ENCODE measurements at regions of chr17 and their contacts with region 1.

Region 1: DNA sequence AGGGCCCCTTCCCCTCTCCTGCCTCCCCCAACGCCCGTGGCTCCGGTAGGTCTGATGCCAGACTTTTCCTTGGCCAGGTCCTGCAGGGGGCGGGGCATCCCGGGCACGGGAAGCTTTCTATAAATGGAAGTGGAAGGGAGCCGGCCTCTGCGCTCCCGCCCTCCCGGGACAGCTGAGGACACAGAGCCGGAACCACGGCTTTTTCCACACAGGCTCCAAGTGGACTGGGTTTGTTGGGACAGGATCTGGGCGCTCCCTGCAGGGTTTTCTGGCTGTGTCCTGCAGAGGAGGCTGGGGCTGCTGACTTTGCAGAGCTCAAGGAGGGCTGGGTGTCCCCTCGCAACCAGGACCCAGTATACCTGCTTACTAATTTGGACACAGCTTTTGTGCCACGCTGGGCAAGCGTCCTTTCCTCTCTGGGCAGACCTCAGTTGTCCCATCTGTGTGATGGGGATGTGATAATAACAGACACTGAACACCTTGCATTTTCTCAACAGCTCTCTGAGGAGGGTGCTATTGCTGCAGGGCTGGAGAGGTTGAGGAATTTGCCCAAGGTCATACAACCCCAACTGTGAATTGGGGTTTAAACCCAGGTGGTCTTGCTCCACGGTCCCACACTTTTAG is 1.8 kb downstream of the TNS4 start:
- DNase-seq: peak; percentile 71
- H3K4me3 ChIP-seq: peak overlapping the region; percentile 69 to 98 (median 77)
- H3K27ac ChIP-seq: peak overlapping the region; percentile 96
- H3K4me1 ChIP-seq: peaks cover 37% of the 10 kb centered on the region
- H3K27me3 ChIP-seq: no peaks in the 10 kb centered on the region
- CTCF ChIP-seq: peak in 1 of 2 donors; percentile 16

Region 2: GRCh38 chr17:40422990-40423616 is 76.6 kb before region 1 on chr17:
- CTCF ChIA-PET with region 1: no interaction called
- dilution Hi-C with region 1: loop called (anchors 5 kb)
- in situ Hi-C with region 1: no loop called
- intact Hi-C with region 1: no loop called
- DNase-seq: no peak
- H3K4me3 ChIP-seq: no peak overlapping the region
- H3K27ac ChIP-seq: no peak overlapping the region
- H3K4me1 ChIP-seq: no peaks in the 10 kb centered on the region
- H3K27me3 ChIP-seq: no peaks in the 10 kb centered on the region
- CTCF ChIP-seq: no peak

Region 3: DNA sequence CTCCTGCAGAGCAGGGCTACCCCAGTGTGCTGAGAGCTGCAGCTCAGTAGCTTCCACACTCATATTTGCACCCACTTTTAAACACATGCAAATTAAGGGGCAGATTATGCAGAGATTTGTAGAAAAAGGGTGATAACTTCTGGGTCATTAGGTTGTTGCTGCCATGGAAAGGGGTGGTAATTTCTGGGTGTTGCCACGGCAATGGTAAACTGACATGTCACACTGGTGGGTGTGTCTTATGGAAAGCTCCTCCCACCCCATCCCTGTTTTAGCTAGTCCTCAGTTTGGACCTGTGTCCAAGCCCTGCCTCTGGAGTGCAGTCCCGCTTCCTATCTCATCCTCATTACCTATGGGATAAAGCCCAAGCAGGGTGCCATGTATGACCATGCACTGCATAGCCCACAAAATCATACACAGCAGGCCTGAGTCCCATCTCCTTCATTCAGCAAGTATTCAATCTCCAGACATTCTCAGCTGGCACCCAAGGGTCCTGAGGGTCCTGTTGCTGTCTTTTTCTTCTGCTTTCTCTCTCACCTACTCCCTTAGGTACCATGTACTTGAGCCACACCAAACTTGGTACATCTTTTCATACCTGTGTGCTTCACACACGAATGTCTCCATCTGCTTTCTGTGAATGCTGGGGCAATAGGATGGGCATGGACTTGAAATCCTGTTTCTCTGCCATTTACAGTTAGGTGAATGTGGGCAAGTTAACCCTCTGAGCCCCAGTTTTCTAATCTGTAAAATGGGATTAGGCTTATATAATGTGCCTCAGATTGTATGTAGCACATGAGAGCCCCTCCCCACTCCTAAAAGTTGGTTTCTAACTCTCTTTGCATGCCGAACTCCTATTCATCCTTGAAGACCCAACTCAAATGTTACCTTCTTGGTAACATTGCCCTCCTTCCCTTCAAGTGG is 26.9 kb before region 1 on chr17:
- CTCF ChIA-PET with region 1: no interaction called
- dilution Hi-C with region 1: no loop called
- in situ Hi-C with region 1: no loop called
- intact Hi-C with region 1: loop called (anchors 1 kb)
- DNase-seq: peak; percentile 85
- H3K4me3 ChIP-seq: no peak overlapping the region
- H3K27ac ChIP-seq: peak overlapping the region; percentile 23
- H3K4me1 ChIP-seq: peaks cover 15% of the 10 kb centered on the region
- H3K27me3 ChIP-seq: no peaks in the 10 kb centered on the region
- CTCF ChIP-seq: no peak

Region 4: DNA sequence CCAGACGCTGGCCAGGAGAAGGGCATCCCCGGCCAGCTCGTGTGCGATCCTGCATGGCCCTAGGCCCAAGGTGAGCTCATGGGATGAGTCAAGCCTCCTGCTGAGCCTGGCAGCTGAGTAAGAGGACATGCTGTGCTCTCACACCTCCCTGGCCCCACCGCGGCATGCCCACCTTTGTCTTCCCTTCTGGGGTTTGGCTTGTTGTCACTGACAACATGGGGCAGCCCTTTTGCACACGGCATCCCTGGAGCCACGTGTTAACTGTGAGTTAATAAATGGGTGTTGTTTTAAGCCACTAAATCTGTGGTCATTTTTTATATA is 10.6 kb after region 1 on chr17:
- CTCF ChIA-PET with region 1: interaction called, 8 read pairs
- dilution Hi-C with region 1: no loop called
- in situ Hi-C with region 1: no loop called
- intact Hi-C with region 1: loop called (anchors 1 kb)
- DNase-seq: peak; percentile 99
- H3K4me3 ChIP-seq: no peak overlapping the region
- H3K27ac ChIP-seq: peak overlapping the region; percentile 100
- H3K4me1 ChIP-seq: peaks cover 30% of the 10 kb centered on the region
- H3K27me3 ChIP-seq: no peaks in the 10 kb centered on the region
- CTCF ChIP-seq: no peak

Region 5: GRCh38 chr17:40542558-40543411 is 43.1 kb after region 1 on chr17:
- CTCF ChIA-PET with region 1: no interaction called
- dilution Hi-C with region 1: no loop called
- in situ Hi-C with region 1: no loop called
- intact Hi-C with region 1: no loop called
- DNase-seq: peak; percentile 96
- H3K4me3 ChIP-seq: no peak overlapping the region
- H3K27ac ChIP-seq: peak overlapping the region; percentile 87
- H3K4me1 ChIP-seq: peaks cover 62% of the 10 kb centered on the region
- H3K27me3 ChIP-seq: no peaks in the 10 kb centered on the region
- CTCF ChIP-seq: no peak

Region 6: GRCh38 chr17:40565769-40566409 is 66.2 kb after region 1 on chr17:
- CTCF ChIA-PET with region 1: interaction called, 16 read pairs
- dilution Hi-C with region 1: no loop called
- in situ Hi-C with region 1: no loop called
- intact Hi-C with region 1: no loop called
- DNase-seq: no peak
- H3K4me3 ChIP-seq: no peak overlapping the region
- H3K27ac ChIP-seq: no peak overlapping the region
- H3K4me1 ChIP-seq: no peaks in the 10 kb centered on the region
- H3K27me3 ChIP-seq: peaks cover 2% of the 10 kb centered on the region
- CTCF ChIP-seq: no peak

Measured in mammary epithelial cell (primary cell).